ENCODE measurements at regions of chr20 and their contacts with region 1.

Region 1: DNA sequence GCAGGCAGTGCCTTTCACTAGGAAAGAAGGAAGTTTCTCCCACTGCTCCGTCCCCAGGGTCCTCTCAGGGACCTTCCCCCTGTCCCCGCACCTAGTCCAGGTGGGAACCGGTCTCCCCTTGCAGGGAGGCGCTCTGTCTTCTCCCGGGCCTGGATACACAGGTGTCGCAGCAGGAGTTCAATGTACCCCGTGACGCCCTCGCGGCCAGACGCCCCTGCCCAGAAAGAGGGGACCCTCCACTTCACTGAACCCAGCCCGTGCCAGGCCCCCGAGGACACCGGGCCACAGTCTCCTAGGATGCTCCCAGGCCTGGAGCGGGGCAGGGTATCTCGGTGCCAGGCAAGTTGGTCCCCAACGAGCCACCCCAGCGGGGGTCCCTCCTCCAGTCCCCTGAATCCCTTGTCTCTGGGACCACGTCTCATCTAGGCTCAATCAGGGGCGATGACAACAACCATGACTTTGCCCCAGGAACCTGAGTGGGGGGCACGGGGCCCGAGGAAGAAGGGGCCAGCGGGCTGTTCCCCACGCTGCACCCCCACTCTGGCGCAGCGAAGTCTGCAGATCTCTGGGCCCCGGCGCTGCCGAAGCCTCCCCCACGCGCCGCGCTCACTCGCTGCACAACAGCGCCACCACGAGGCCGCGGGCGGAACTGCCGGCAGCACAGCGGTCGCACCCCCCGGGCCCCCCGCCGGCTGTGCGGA is 103.0 kb downstream of the EDN3 start:
- DNase-seq: peak; percentile 26
- H3K4me3 Mint-ChIP-seq: no peak overlapping the region
- H3K27ac Mint-ChIP-seq: no peak overlapping the region
- H3K4me1 Mint-ChIP-seq: no peaks in the 10 kb centered on the region
- H3K27me3 Mint-ChIP-seq: peaks cover 44% of the 10 kb centered on the region
- CTCF ChIP-seq: peak; percentile 92

Region 2: DNA sequence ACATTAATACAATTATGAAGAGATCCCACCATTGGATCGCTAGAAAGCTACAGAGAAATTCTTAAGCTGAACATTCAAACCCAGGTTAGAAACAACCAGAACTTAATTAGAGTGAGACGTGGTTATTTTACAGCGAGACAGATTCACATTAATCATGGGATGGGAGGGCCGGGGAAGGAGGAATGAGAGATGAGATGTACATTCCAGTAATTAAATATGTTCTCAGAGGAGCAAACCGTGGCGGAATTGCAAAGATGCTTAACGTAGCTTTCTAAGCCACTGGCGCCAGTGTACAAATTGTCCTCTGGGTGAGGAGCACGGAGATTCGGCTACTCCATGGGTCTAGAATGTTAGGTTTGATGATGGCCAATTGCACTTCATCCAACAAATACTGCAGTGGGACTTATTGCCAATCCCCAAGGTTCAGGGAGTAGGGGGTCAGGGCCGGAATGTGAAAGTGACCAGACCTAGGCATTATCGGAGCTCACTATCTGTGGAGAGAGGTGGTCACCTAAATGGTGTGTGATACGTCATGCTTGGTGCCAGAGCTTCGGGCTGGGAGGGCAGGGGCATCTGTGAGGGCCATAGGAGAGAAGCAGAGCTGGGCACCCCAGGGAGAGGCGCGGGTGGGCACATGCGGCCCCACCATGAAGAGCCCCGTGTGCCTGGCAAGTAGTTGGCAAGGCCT is 11.7 kb after region 1 on chr20:
- CTCF ChIA-PET with region 1: interaction called, 10 read pairs
- POLR2A ChIA-PET with region 1: no interaction called
- intact Hi-C with region 1: no loop called
- DNase-seq: no peak
- H3K4me3 Mint-ChIP-seq: no peak overlapping the region
- H3K27ac Mint-ChIP-seq: no peak overlapping the region
- H3K4me1 Mint-ChIP-seq: no peaks in the 10 kb centered on the region
- H3K27me3 Mint-ChIP-seq: peaks cover 84% of the 10 kb centered on the region
- CTCF ChIP-seq: no peak

Region 3: GRCh38 chr20:59469267-59470252 is 66.1 kb after region 1 on chr20:
- CTCF ChIA-PET with region 1: no interaction called
- POLR2A ChIA-PET with region 1: no interaction called
- intact Hi-C with region 1: no loop called
- DNase-seq: no peak
- H3K4me3 Mint-ChIP-seq: no peak overlapping the region
- H3K27ac Mint-ChIP-seq: no peak overlapping the region
- H3K4me1 Mint-ChIP-seq: no peaks in the 10 kb centered on the region
- H3K27me3 Mint-ChIP-seq: peaks cover 63% of the 10 kb centered on the region
- CTCF ChIP-seq: no peak

Region 4: DNA sequence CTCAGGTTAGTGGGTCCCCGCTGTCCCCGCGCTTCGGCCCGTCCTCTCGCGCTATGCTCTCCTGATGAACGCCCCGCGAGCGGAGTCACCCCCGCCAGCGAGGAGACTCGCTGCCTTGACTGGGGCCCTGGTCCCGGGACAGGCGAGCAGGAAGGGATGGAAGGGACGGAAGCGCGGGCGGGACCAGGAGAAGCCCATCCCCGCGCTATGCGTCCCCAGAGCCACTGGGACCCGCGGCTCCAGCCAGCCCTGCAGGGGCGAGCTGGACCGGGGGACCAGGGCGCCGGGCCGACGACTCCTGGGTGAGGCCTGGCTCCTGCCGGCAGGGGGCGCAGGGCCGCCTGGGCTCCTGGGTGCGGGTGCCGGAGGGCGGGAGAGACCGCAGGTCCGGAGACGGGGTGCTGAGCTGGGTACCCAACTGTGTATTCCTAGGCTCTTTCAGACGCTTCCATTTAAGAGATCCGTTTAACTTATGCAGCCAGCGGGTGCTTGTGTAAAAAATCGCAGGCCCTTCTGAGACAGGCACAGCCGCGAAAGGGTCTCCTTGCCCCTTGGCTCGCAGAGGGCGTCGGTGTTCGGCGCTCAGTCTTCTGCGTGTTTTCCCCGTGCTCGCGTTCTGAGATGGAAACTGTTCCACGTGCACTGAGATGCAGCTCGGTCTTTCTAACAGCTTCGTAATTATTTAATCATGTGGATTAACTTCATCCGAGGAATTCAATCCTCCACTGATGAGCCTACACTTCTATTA is 530.6 kb after region 1 on chr20:
- CTCF ChIA-PET with region 1: no interaction called
- POLR2A ChIA-PET with region 1: no interaction called
- intact Hi-C with region 1: no loop called
- DNase-seq: peak; percentile 69
- H3K4me3 Mint-ChIP-seq: peak overlapping the region; percentile 70
- H3K27ac Mint-ChIP-seq: no peak overlapping the region
- H3K4me1 Mint-ChIP-seq: peaks cover 16% of the 10 kb centered on the region
- H3K27me3 Mint-ChIP-seq: peaks cover 4% of the 10 kb centered on the region
- CTCF ChIP-seq: peak; percentile 97